Activated naive CD4-positive, alpha-beta T cell treated with anti-CD3 and anti-CD28 coated beads for 36 hours (primary cell): ENCODE measurements at regions of chr12 and their contacts with region 1.

Region 1: DNA sequence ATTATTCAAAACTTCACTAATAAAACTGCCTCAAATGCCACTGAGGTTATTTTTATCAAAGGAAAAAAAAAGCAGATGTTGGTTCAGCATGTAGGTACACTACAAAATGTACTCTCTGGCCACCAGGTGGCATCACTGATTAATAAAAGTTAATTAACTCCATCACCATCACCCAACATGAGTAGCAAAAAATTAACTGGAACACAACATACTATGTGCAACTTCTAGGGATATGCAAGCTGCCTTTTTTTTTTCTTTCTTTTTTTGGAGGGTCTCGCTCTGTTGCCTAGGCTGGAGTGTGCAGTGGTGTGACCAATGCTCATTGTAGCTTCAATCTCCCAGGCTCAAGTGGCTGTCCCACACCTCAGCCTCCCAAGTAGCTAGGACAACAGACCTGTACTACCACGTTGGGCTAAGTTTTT is 43.8 kb upstream of the NR2C1 start:
- DNase-seq: peak; percentile 83
- H3K4me3 Mint-ChIP-seq: no peak overlapping the region
- H3K27ac Mint-ChIP-seq: no peak overlapping the region
- H3K4me1 Mint-ChIP-seq: peaks cover 2% of the 10 kb centered on the region
- H3K27me3 Mint-ChIP-seq: no peaks in the 10 kb centered on the region

Region 2: GRCh38 chr12:94795520-94795919 is 321.7 kb before region 1 on chr12:
- CTCF ChIA-PET with region 1: no interaction called
- intact Hi-C with region 1: no loop called
- DNase-seq: no peak
- H3K4me3 Mint-ChIP-seq: no peak overlapping the region
- H3K27ac Mint-ChIP-seq: no peak overlapping the region
- H3K4me1 Mint-ChIP-seq: peaks cover 13% of the 10 kb centered on the region
- H3K27me3 Mint-ChIP-seq: no peaks in the 10 kb centered on the region

Region 3: GRCh38 chr12:95265765-95266164 is 148.6 kb after region 1 on chr12:
- CTCF ChIA-PET with region 1: no interaction called
- intact Hi-C with region 1: no loop called
- DNase-seq: no peak
- H3K4me3 Mint-ChIP-seq: no peak overlapping the region
- H3K27ac Mint-ChIP-seq: no peak overlapping the region
- H3K4me1 Mint-ChIP-seq: no peaks in the 10 kb centered on the region
- H3K27me3 Mint-ChIP-seq: no peaks in the 10 kb centered on the region

Region 4: GRCh38 chr12:95336390-95337067 is 219.3 kb after region 1 on chr12:
- CTCF ChIA-PET with region 1: interaction called, 17 read pairs
- intact Hi-C with region 1: loop called (anchors 1 kb)
- DNase-seq: no peak
- H3K4me3 Mint-ChIP-seq: no peak overlapping the region
- H3K27ac Mint-ChIP-seq: no peak overlapping the region
- H3K4me1 Mint-ChIP-seq: peaks cover 5% of the 10 kb centered on the region
- H3K27me3 Mint-ChIP-seq: no peaks in the 10 kb centered on the region

Region 5: DNA sequence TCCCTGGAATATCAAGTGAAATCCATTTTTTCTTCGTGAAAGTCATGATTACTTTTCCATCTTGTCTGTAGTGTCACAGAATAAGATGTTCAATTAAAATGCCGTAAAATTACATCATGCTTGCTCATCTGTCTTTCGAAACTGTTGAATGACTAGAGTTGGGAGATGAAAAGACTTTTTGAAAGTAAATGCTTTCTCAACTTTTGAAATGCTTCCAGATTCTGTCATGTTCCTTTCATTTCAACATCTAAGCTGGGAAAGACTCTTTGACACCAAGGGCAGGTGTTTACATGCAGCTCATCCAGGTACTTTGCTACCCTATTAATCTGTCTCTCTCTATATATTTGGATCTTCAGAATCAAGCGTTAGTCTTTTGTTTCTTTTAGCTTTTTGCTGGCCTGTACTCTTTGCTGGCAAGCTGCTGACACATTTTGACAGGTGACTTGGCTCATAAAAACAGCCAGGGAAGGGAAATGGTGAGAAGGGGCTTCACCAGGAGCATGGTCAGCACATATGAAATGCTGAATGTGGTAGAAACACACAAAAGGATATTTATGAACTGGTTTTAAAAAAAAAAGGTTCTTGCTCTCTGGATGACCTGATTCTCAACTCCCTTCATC is 279.8 kb after region 1 on chr12:
- CTCF ChIA-PET with region 1: no interaction called
- intact Hi-C with region 1: loop called (anchors 5 kb)
- DNase-seq: peak; percentile 21
- H3K4me3 Mint-ChIP-seq: no peak overlapping the region
- H3K27ac Mint-ChIP-seq: peak overlapping the region; percentile 54
- H3K4me1 Mint-ChIP-seq: peaks cover 22% of the 10 kb centered on the region
- H3K27me3 Mint-ChIP-seq: peaks cover 25% of the 10 kb centered on the region

Region 6: GRCh38 chr12:95532851-95533250 is 415.7 kb after region 1 on chr12:
- CTCF ChIA-PET with region 1: interaction called, 27 read pairs
- intact Hi-C with region 1: loop called (anchors 1 kb)
- DNase-seq: no peak
- H3K4me3 Mint-ChIP-seq: no peak overlapping the region
- H3K27ac Mint-ChIP-seq: no peak overlapping the region
- H3K4me1 Mint-ChIP-seq: peaks cover 12% of the 10 kb centered on the region
- H3K27me3 Mint-ChIP-seq: no peaks in the 10 kb centered on the region

Region 7: DNA sequence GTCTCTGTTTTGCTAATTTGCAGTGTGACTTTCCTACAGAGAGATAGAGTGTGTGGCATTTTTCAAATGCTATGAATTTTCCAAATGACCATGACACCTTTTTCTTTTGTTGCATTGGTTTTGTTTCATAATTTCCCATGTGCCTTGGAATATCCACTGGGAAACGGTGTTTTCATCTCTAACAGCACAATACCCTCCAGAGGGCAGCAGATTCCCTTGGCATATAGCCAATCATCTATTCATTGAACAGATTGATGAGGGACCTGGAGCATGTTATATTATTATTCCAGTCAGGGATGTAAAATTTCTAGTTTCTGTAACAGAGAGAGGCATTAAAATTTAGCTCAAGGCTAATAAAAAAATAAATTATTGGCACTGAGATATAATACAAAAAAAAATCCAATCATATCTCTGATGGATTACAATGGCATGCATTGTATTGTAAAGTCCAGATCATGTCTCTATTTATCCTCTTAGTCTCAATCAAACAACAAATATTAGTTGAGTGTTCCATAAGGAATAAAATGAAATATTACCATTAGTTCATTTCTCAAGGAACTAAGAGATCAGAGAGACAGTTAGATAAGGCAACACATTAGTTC is 703.0 kb after region 1 on chr12:
- CTCF ChIA-PET with region 1: no interaction called
- intact Hi-C with region 1: loop called (anchors 5 kb)
- DNase-seq: peak; percentile 28
- H3K4me3 Mint-ChIP-seq: no peak overlapping the region
- H3K27ac Mint-ChIP-seq: no peak overlapping the region
- H3K4me1 Mint-ChIP-seq: no peaks in the 10 kb centered on the region
- H3K27me3 Mint-ChIP-seq: peaks cover 14% of the 10 kb centered on the region